ENCODE measurements at regions of chr9 and their contacts with region 1.

Region 1: DNA sequence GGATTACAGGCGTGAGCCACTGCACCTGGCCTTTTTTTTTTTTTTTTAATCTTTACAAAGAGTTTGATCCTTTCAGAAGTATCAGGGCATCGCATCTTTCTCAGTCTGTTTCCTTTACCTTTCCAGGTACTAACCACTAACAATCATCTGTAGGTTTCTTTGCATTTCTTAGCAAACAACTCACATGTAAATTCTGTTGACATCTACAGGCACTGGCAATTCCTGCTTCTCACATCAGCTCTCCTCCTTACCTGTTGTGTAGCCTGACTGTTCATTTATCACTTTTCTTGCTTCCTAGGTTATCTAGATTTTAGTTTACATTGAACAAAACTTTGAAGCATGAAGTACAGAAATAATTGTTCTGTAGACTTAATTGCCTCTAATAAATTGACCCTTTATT is 27.5 kb upstream of the VPS13A start:
- DNase-seq: no peak
- ATAC-seq: no peak
- H3K4me3 ChIP-seq: no peak overlapping the region
- H3K27ac ChIP-seq: no peak overlapping the region
- H3K4me1 ChIP-seq: no peaks in the 10 kb centered on the region
- H3K27me3 ChIP-seq: no peaks in the 10 kb centered on the region
- CTCF ChIP-seq: no peak
- POLR2A ChIP-seq: no peak
- RAD21 ChIP-seq: no peak

Region 2: DNA sequence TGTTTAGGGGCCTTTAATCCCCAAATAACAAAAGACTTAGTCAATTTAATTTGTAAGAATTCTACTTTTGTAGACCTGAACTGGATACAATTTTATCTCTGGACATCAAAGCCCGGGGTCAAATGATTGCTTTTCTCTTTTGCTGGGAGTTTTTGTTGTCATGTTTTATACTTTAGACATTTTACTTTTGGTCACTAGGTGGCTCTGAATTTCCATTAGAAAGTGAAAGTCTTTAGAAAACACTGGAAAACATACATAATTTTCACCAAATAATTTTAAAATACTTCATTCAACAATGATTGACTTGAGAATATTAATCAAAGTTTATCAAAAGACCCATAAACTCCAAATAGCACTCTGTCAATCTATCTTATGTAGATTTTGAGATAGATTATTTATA is 388.4 kb before region 1 on chr9:
- CTCF ChIA-PET with region 1: interaction called, 3 read pairs
- POLR2A ChIA-PET with region 1: no interaction called
- RAD21 ChIA-PET with region 1: no interaction called
- intact Hi-C with region 1: loop called (anchors 5 kb)
- DNase-seq: no peak
- ATAC-seq: no peak
- H3K4me3 ChIP-seq: no peak overlapping the region
- H3K27ac ChIP-seq: no peak overlapping the region
- H3K4me1 ChIP-seq: no peaks in the 10 kb centered on the region
- H3K27me3 ChIP-seq: no peaks in the 10 kb centered on the region; the same call in 1 of the 2 replicates
- CTCF ChIP-seq: peak; percentile 26 to 42 (median 29); a peak in 4 of 6 replicates
- POLR2A ChIP-seq: no peak
- RAD21 ChIP-seq: peak; percentile 52

Region 3: DNA sequence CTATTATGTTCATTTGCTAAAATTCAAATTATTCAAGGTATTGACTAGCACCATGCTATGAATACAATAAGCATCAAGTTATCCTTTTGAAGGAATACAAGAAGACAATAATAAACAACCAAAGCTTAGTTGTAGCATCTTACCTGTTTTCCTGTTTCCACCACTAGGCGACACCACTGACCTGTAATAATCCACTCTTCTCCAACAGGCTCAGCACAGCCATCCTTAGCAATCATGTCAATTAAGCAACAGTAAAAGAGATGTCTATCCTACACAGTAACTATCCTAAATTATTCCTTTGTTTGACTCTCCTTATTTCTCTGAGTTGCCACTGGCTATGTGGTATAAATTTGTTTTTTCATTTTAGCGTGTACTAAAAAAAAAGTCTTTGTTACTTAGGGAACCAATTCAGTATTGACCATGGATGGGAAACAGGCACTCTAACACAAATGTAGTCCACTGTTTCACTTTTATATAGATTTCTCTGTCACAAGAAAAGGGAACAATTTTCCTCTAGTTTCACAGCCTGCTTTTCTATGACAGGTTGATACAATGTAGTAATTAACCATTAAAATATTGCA is 339.4 kb before region 1 on chr9:
- CTCF ChIA-PET with region 1: interaction called, 16 read pairs
- POLR2A ChIA-PET with region 1: no interaction called
- RAD21 ChIA-PET with region 1: no interaction called
- intact Hi-C with region 1: loop called (anchors 1 kb)
- DNase-seq: peak; percentile 59
- ATAC-seq: peak; percentile 90
- H3K4me3 ChIP-seq: no peak overlapping the region
- H3K27ac ChIP-seq: no peak overlapping the region
- H3K4me1 ChIP-seq: no peaks in the 10 kb centered on the region
- H3K27me3 ChIP-seq: 0 out of 2 replicates have a peak, but pooled peaks cover 11% of the 10 kb centered on the region
- CTCF ChIP-seq: peak; percentile 63 to 89 (median 88)
- POLR2A ChIP-seq: no peak
- RAD21 ChIP-seq: peak; percentile 92

Region 4: GRCh38 chr9:77011973-77012821 is 137.7 kb before region 1 on chr9:
- CTCF ChIA-PET with region 1: interaction called, 3 read pairs
- POLR2A ChIA-PET with region 1: no interaction called
- RAD21 ChIA-PET with region 1: no interaction called
- intact Hi-C with region 1: loop called (anchors 2 kb)
- DNase-seq: peak; percentile 38
- ATAC-seq: peak; percentile 95
- H3K4me3 ChIP-seq: peak overlapping the region; percentile 31 to 51
- H3K27ac ChIP-seq: no peak overlapping the region
- H3K4me1 ChIP-seq: peaks cover 4 to 11% of the 10 kb centered on the region in 2 experiments; a peak in 3 of 4 replicates
- H3K27me3 ChIP-seq: no peaks in the 10 kb centered on the region
- CTCF ChIP-seq: peak; percentile 55 to 81 (median 74); a peak in 5 of 6 replicates
- POLR2A ChIP-seq: no peak
- RAD21 ChIP-seq: peak; percentile 69

Region 5: GRCh38 chr9:77163884-77164283 is 14.0 kb after region 1 on chr9:
- CTCF ChIA-PET with region 1: interaction called, 10 read pairs
- POLR2A ChIA-PET with region 1: no interaction called
- RAD21 ChIA-PET with region 1: interaction called in 1 of 2 experiments, 3 read pairs
- intact Hi-C with region 1: no loop called
- DNase-seq: no peak
- ATAC-seq: no peak
- H3K4me3 ChIP-seq: no peak overlapping the region
- H3K27ac ChIP-seq: no peak overlapping the region
- H3K4me1 ChIP-seq: no peaks in the 10 kb centered on the region
- H3K27me3 ChIP-seq: no peaks in the 10 kb centered on the region
- CTCF ChIP-seq: no peak
- POLR2A ChIP-seq: no peak
- RAD21 ChIP-seq: no peak

Region 6: GRCh38 chr9:77304543-77304942 is 154.7 kb after region 1 on chr9:
- CTCF ChIA-PET with region 1: no interaction called
- POLR2A ChIA-PET with region 1: no interaction called
- RAD21 ChIA-PET with region 1: no interaction called
- intact Hi-C with region 1: no loop called
- DNase-seq: no peak
- ATAC-seq: no peak
- H3K4me3 ChIP-seq: no peak overlapping the region
- H3K27ac ChIP-seq: no peak overlapping the region
- H3K4me1 ChIP-seq: no peaks in the 10 kb centered on the region
- H3K27me3 ChIP-seq: no peaks in the 10 kb centered on the region
- CTCF ChIP-seq: no peak
- POLR2A ChIP-seq: no peak
- RAD21 ChIP-seq: no peak

Measured in HCT116 (cell line).